ENCODE measurements at regions of chr3 and their contacts with region 1.

Region 1: GRCh38 chr3:4850928-4851265 is 128.3 kb upstream of the BHLHE40 start:
- DNase-seq: no peak
- H3K4me3 Mint-ChIP-seq: peak overlapping the region; percentile 28
- H3K27ac Mint-ChIP-seq: peak overlapping the region; percentile 97
- H3K4me1 Mint-ChIP-seq: peaks cover 81% of the 10 kb centered on the region
- H3K27me3 Mint-ChIP-seq: no peaks in the 10 kb centered on the region

Region 2: GRCh38 chr3:4888913-4889846 is 38.3 kb after region 1 on chr3:
- intact Hi-C with region 1: loop called (anchors 1 kb)
- DNase-seq: peak; percentile 34
- H3K4me3 Mint-ChIP-seq: peak overlapping the region; percentile 17
- H3K27ac Mint-ChIP-seq: peak overlapping the region; percentile 91
- H3K4me1 Mint-ChIP-seq: peaks cover 58% of the 10 kb centered on the region
- H3K27me3 Mint-ChIP-seq: no peaks in the 10 kb centered on the region

Region 3: GRCh38 chr3:4898454-4899313 is 47.8 kb after region 1 on chr3:
- intact Hi-C with region 1: loop called (anchors 1 kb)
- DNase-seq: no peak
- H3K4me3 Mint-ChIP-seq: peak overlapping the region; percentile 26
- H3K27ac Mint-ChIP-seq: peak overlapping the region; percentile 94
- H3K4me1 Mint-ChIP-seq: peaks cover 81% of the 10 kb centered on the region
- H3K27me3 Mint-ChIP-seq: no peaks in the 10 kb centered on the region

Region 4: GRCh38 chr3:4963669-4964589 is 113.0 kb after region 1 on chr3:
- intact Hi-C with region 1: no loop called
- DNase-seq: no peak
- H3K4me3 Mint-ChIP-seq: no peak overlapping the region
- H3K27ac Mint-ChIP-seq: no peak overlapping the region
- H3K4me1 Mint-ChIP-seq: peaks cover 13% of the 10 kb centered on the region
- H3K27me3 Mint-ChIP-seq: no peaks in the 10 kb centered on the region

Measured in activated T-helper 2 cell treated with anti-CD3 and anti-CD28 coated beads, Interferon-gamma antibody, Interleukin-2, Interleukin-4, amounts not matched to agents 10 μg/mL and 5 μg/mL and 100 μg/mL, durations not matched to agents 14 hours and 24 hours and 36 hours (primary cell).